ENCODE measurements at regions of chr3 and their contacts with region 1.

Region 1: DNA sequence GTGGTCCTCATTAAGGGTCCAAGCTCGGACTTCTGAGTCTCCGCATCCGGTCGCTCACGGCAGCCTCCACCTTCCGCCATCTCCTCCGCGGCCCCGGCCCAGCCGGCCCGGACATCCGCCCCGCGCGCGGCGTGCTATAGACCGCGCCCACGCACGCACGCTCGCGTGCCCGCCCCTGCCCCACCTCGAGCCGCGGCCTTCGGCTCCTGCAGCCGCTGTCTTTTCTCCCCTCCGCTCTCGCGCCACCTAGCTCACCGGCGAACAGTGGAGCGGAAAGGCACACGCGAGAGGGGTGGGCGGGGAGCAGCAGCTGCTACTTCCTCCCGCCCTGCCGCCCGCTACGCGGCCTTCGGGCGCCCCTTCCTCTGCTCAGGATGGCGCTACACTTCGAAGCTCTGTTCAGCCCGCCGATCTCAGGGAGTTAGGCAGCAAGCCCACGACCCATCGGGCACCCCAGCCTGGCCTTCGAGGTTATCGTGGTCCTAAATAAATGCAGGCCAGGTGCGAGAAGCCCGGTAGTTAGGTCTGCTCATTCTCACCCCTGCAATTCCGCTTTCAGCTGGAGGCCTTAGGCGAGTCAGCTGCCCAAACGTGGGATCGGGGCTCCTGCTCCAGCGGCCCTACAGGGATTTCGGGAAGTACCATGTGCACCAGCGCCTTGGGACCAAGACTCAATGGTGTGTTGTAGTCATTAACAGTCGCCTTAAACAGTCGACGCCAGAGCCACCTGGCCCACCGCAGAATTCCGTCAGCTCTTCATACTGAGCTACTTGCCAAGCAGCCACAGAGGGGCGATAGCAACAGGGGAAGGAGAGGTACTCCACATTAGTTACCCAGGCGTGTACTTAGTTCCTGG is at the start of gene USP4:
- DNase-seq: peak; percentile 96
- H3K4me3 Mint-ChIP-seq: peak within 1 kb of the TSS; percentile 98
- H3K27ac Mint-ChIP-seq: peak within 1 kb of the TSS; percentile 100
- H3K4me1 Mint-ChIP-seq: peaks cover 51% of the 10 kb centered on the region
- H3K27me3 Mint-ChIP-seq: no peaks in the 10 kb centered on the region

Region 2: DNA sequence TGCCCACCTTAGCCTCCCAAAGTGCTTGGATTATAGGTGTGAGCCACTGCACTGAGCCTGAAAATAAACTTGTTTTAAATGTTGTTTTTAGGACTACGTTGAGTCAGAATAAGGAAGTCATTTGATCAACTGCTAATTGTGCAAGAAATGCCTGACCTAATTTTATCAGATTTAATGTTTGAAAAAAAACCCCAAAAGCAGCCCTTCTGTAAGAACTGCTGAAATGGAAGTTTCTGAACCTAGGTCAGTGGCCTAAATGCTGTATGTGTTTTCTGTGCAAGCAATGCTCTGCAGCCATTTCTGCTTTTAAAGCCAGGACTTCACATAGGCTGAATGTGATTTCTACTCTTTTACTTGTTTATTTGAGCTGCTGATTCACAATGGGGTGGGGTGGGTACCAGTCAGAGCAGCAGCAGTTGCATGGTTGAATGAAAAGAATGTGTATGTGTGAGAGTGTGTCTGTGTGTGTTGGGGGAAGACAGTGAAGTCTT is 11.4 kb after region 1 on chr3:
- CTCF ChIA-PET with region 1: interaction called, 16 read pairs
- DNase-seq: no peak
- H3K4me3 Mint-ChIP-seq: no peak overlapping the region
- H3K27ac Mint-ChIP-seq: no peak overlapping the region
- H3K4me1 Mint-ChIP-seq: peaks cover 11% of the 10 kb centered on the region
- H3K27me3 Mint-ChIP-seq: no peaks in the 10 kb centered on the region

Region 3: GRCh38 chr3:49358217-49358883 is 18.2 kb after region 1 on chr3 and contains the start of gene GPX1:
- CTCF ChIA-PET with region 1: interaction called, 27 read pairs
- DNase-seq: peak; percentile 90
- H3K4me3 Mint-ChIP-seq: peak within 1 kb of the TSS; percentile 97
- H3K27ac Mint-ChIP-seq: peak within 1 kb of the TSS; percentile 93
- H3K4me1 Mint-ChIP-seq: peaks cover 45% of the 10 kb centered on the region
- H3K27me3 Mint-ChIP-seq: no peaks in the 10 kb centered on the region

Region 4: GRCh38 chr3:49411968-49412631 is 71.9 kb after region 1 on chr3 and contains the starts of genes RHOA and TCTA:
- CTCF ChIA-PET with region 1: interaction called, 18 read pairs
- DNase-seq: peak; percentile 99
- H3K4me3 Mint-ChIP-seq: peak within 1 kb of the TSS; percentile 98
- H3K27ac Mint-ChIP-seq: peak within 1 kb of the TSS; percentile 95
- H3K4me1 Mint-ChIP-seq: peaks cover 73% of the 10 kb centered on the region
- H3K27me3 Mint-ChIP-seq: no peaks in the 10 kb centered on the region

Region 5: DNA sequence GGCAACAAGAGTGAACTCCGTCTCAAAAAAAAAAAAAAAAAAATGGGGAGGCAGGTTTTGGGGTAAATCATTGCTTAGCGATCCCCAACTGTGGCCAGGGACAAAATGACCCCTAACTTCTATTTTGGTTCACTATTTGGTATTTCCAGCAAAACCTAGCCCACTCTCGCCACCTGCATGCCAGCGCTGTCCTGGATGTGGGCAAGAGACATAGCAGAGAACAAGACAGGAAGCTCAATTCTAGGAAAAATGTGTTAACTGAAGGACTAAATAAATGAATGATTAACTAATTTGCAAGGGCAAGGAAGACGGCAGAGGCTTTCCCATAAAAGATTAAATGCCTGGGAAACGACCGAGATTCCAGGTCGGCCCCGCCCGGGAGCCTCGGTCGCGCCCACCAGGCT is 88.5 kb after region 1 on chr3:
- CTCF ChIA-PET with region 1: interaction called, 11 read pairs
- DNase-seq: no peak
- H3K4me3 Mint-ChIP-seq: peak overlapping the region; percentile 82
- H3K27ac Mint-ChIP-seq: peak overlapping the region; percentile 94
- H3K4me1 Mint-ChIP-seq: peaks cover 39% of the 10 kb centered on the region
- H3K27me3 Mint-ChIP-seq: no peaks in the 10 kb centered on the region

Region 6: DNA sequence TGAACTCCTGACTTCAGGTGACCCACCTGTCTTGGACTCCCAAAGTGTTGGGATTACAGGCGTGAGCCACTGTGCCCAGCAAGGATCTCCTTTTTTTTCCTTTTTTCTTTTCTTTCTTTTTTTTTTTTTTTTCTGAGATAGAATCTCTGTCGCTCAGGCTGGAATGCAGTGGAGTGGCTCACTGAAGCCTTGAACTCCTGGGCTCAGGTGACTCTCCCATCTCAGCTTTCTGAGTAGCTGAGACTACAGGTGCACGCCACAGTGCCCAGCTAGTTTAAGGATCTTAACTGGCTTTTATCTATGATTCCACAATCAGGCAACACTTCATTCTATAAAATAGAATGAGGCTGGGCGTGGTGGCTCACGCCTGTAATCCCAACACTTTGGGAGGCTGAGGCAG is 105.2 kb after region 1 on chr3:
- CTCF ChIA-PET with region 1: interaction called, 34 read pairs
- DNase-seq: no peak
- H3K4me3 Mint-ChIP-seq: no peak overlapping the region
- H3K27ac Mint-ChIP-seq: no peak overlapping the region
- H3K4me1 Mint-ChIP-seq: peaks cover 25% of the 10 kb centered on the region
- H3K27me3 Mint-ChIP-seq: no peaks in the 10 kb centered on the region

Region 7: DNA sequence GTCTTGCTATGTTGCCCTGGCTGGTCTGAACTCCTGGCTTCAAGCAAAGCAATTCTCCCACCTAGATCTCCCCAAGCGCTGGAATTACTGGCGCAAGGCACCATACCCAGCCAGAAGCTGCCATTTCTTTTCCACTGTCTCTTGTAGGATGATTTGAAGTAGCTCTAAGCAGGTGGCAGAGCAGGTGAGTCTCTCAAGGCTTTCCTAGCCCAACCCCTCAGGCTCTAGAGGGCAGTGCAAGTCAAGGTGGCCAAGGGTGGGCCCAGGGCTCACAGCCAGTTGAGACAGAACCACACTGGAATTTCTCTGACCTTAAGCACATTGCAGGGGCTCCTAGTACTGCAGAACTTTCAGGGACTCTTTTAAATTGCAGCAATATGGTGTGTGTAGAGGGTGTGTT is 114.3 kb after region 1 on chr3:
- CTCF ChIA-PET with region 1: interaction called, 34 read pairs
- DNase-seq: no peak
- H3K4me3 Mint-ChIP-seq: no peak overlapping the region
- H3K27ac Mint-ChIP-seq: no peak overlapping the region
- H3K4me1 Mint-ChIP-seq: no peaks in the 10 kb centered on the region
- H3K27me3 Mint-ChIP-seq: peaks cover 31% of the 10 kb centered on the region

Measured in activated naive CD4-positive, alpha-beta T cell treated with anti-CD3 and anti-CD28 coated beads, Interleukin-2, amount 10 ng/mL, durations not matched to agents 7 days and 5 days (primary cell).